Gastrocnemius medialis (tissue), 4 donors: ENCODE measurements at regions of chr1 and their contacts with region 1.

Region 1: GRCh38 chr1:178126790-178127189 is 32.9 kb downstream of the RASAL2 start:
- DNase-seq: no peak
- ATAC-seq: no peak
- H3K4me3 ChIP-seq: no peak overlapping the region
- H3K27ac ChIP-seq: peak overlapping the region in 1 of 4 donors; percentile 5
- H3K4me1 ChIP-seq: no peaks in the 10 kb centered on the region
- H3K27me3 ChIP-seq: no peaks in the 10 kb centered on the region
- CTCF ChIP-seq: no peak
- POLR2A ChIP-seq: peak in 1 of 2 donors; percentile 18

Region 2: DNA sequence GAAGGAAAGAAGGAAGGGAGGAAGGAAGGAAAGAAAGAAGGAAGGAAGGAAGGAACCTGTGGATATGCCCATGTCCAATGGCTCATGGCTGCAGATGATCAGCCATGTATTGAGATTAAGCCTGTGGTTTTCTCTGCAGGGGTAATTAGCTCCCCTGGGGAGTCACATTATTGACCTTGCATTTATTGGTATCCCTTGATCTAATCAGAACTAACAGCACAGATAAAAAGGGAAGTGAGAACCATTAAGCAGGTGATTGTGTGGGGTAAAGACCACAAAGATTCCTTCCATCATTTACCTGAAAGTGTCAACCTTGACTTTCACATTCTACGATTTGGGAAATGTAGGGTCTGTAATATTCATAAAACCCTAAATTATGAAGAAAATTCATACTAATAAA is 565.4 kb before region 1 on chr1:
- in situ Hi-C with region 1: no loop called
- intact Hi-C with region 1: loop called (anchors 5 kb)
- DNase-seq: no peak
- ATAC-seq: no peak
- H3K4me3 ChIP-seq: no peak overlapping the region
- H3K27ac ChIP-seq: no peak overlapping the region
- H3K4me1 ChIP-seq: no peaks in the 10 kb centered on the region
- H3K27me3 ChIP-seq: no peaks in the 10 kb centered on the region
- CTCF ChIP-seq: no peak
- POLR2A ChIP-seq: no peak

Region 3: GRCh38 chr1:177858332-177858821 is 268.4 kb before region 1 on chr1:
- in situ Hi-C with region 1: no loop called
- intact Hi-C with region 1: no loop called
- DNase-seq: no peak
- ATAC-seq: no peak
- H3K4me3 ChIP-seq: no peak overlapping the region
- H3K27ac ChIP-seq: no peak overlapping the region
- H3K4me1 ChIP-seq: no peaks in the 10 kb centered on the region
- H3K27me3 ChIP-seq: no peaks in the 10 kb centered on the region
- CTCF ChIP-seq: no peak
- POLR2A ChIP-seq: no peak

Region 4: GRCh38 chr1:178055779-178056471 is 70.9 kb before region 1 on chr1:
- in situ Hi-C with region 1: no loop called
- intact Hi-C with region 1: no loop called
- DNase-seq: peak in 1 of 2 donors; percentile 18
- ATAC-seq: peak in 1 of 2 donors; percentile 55
- H3K4me3 ChIP-seq: no peak overlapping the region
- H3K27ac ChIP-seq: peak overlapping the region; percentile 63 to 78 (median 71)
- H3K4me1 ChIP-seq: peaks cover 32 to 69% of the 10 kb centered on the region in 2 donors
- H3K27me3 ChIP-seq: no peaks in the 10 kb centered on the region
- CTCF ChIP-seq: peak in 2 of 5 experiments; percentile 35 to 40
- POLR2A ChIP-seq: no peak